ENCODE measurements at regions of chr11 and their contacts with region 1.

Region 1: GRCh38 chr11:72091005-72091691 is 10.5 kb downstream of the LRRC51 start:
- DNase-seq: peak; percentile 71 to 88
- H3K4me3 ChIP-seq: no peak overlapping the region
- H3K27ac ChIP-seq: peak overlapping the region in 4 of 5 donors; percentile 23 to 66 (median 44)
- H3K4me1 ChIP-seq: peaks cover 0 to 29% (median 15%) of the 10 kb centered on the region in 4 donors
- H3K27me3 ChIP-seq: no peaks in the 10 kb centered on the region
- CTCF ChIP-seq: peak in 6 of 7 experiments; percentile 29 to 96 (median 86)
- EP300 ChIP-seq: no peak
- POLR2A ChIP-seq: no peak

Region 2: DNA sequence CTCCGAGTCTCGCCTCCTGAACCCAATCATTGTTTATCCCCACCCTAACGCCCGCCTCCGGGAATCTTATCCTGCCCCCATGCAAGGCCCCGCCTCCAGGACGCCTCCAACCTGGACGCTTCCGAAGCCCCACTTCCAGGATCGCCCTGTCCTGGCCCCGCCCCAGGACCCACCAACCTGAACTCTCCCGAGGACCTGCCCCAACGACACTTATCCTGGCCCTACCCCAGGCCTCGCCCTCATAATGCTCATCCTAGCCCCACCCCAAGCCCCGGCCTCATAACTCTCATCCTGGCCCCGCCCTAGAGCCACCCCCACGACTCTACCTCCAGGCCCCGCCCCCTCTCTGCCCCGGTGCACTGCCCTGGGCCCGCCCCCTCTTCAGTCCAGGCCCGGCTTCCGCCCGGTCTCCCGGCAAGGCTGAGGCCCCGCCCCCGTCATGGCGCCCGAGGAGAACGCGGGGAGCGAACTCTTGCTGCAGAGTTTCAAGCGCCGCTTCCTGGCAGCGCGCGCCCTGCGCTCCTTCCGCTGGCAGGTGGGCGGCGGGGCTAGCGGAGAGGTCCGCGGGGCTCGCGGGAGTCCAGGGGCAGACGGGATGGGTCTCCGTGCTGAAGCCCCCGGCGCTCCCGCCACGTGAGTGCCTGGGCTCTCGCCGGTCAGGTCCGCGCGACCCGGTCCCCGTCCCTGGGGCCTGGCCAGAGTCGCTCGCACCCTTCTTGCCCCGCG is 303.9 kb before region 1 on chr11:
- intact Hi-C with region 1: no loop called
- DNase-seq: peak; percentile 96 to 98
- H3K4me3 ChIP-seq: peak overlapping the region; percentile 59 to 79 (median 68)
- H3K27ac ChIP-seq: peak overlapping the region; percentile 63 to 94 (median 88)
- H3K4me1 ChIP-seq: peaks cover 0 to 17% (median 9%) of the 10 kb centered on the region in 4 donors
- H3K27me3 ChIP-seq: no peaks in the 10 kb centered on the region
- CTCF ChIP-seq: no peak
- EP300 ChIP-seq: no peak
- POLR2A ChIP-seq: no peak

Region 3: GRCh38 chr11:71908218-71908617 is 182.9 kb before region 1 on chr11:
- intact Hi-C with region 1: no loop called
- DNase-seq: no peak
- H3K4me3 ChIP-seq: no peak overlapping the region
- H3K27ac ChIP-seq: no peak overlapping the region
- H3K4me1 ChIP-seq: no peaks in the 10 kb centered on the region
- H3K27me3 ChIP-seq: no peaks in the 10 kb centered on the region
- CTCF ChIP-seq: no peak
- EP300 ChIP-seq: no peak
- POLR2A ChIP-seq: no peak

Region 4: GRCh38 chr11:72026090-72026489 is 65.1 kb before region 1 on chr11:
- intact Hi-C with region 1: loop called (anchors 5 kb)
- DNase-seq: no peak
- H3K4me3 ChIP-seq: no peak overlapping the region
- H3K27ac ChIP-seq: peak overlapping the region in 4 of 5 donors; percentile 58 to 72 (median 64)
- H3K4me1 ChIP-seq: peaks cover 25 to 77% (median 49%) of the 10 kb centered on the region in 4 donors
- H3K27me3 ChIP-seq: no peaks in the 10 kb centered on the region
- CTCF ChIP-seq: no peak
- EP300 ChIP-seq: no peak
- POLR2A ChIP-seq: no peak

Region 5: GRCh38 chr11:72132646-72133045 is 41.5 kb after region 1 on chr11:
- intact Hi-C with region 1: no loop called
- DNase-seq: no peak
- H3K4me3 ChIP-seq: no peak overlapping the region
- H3K27ac ChIP-seq: peak overlapping the region in 2 of 5 donors; percentile 9 to 57
- H3K4me1 ChIP-seq: no peaks in the 10 kb centered on the region
- H3K27me3 ChIP-seq: peaks cover 0 to 8% (median 0%) of the 10 kb centered on the region in 3 donors
- CTCF ChIP-seq: no peak
- EP300 ChIP-seq: no peak
- POLR2A ChIP-seq: no peak